ENCODE measurements at regions of chr7 and their contacts with region 1.

Region 1: GRCh38 chr7:56063882-56064625 is at the start of gene SUMF2:
- DNase-seq: peak; percentile 87 to 89 (median 89)
- H3K4me3 ChIP-seq: peak within 1 kb of the TSS; percentile 79 to 97 (median 92)
- H3K27ac ChIP-seq: peak within 1 kb of the TSS; percentile 46 to 80
- H3K4me1 ChIP-seq: peaks cover 6 to 28% (median 14%) of the 10 kb centered on the region in 4 experiments
- H3K27me3 ChIP-seq: no peaks in the 10 kb centered on the region

Region 2: GRCh38 chr7:55509322-55509721 is 554.7 kb before region 1 on chr7:
- CTCF ChIA-PET with region 1: no interaction called
- POLR2A ChIA-PET with region 1: interaction called, 10 read pairs
- DNase-seq: no peak
- H3K4me3 ChIP-seq: no peak overlapping the region
- H3K27ac ChIP-seq: no peak overlapping the region
- H3K4me1 ChIP-seq: no peaks in the 10 kb centered on the region
- H3K27me3 ChIP-seq: no peaks in the 10 kb centered on the region

Region 3: DNA sequence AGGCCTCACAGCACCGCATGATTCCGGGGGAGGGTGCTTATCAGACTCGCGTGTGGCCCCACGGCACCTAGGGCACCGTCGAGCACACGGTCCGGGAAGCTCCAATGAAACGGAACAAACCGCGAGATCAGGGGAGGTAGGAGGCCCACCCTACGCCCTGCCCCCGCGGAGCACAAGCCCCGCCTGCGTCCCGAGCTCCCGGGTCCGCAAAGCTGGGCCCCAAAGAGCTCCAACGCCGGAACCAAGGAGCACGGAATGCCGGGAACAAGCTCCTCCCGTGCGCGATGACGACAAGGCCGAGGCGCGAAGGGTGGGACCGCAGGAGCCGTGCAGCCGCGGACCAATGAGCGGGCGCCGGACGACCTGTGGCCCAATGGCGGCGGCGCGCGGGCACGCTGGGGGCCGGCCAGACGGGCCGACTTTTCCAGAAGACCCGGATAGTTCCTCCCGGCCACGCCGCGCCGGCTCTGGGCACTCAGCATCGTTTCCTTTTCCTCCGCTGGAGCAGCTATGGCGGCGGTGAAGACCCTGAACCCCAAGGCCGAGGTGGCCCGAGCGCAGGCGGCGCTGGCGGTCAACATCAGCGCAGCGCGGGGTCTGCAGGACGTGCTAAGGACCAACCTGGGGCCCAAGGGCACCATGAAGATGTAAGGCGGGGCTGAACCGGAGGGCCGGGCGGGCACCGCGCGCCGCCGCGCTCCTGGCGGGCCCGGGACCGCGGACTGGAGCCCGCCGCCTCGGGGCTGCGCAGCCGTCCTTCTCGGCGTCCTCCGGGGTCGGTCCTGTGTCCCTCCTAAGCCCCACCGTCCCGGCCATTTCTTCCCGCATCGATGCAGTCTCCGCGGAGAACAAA is 12.5 kb before region 1 on chr7 and contains the starts of genes CCT6A and PSPH:
- CTCF ChIA-PET with region 1: interaction called, 13 read pairs
- POLR2A ChIA-PET with region 1: interaction called, 10 read pairs
- DNase-seq: peak; percentile 93 to 95 (median 94)
- H3K4me3 ChIP-seq: peak within 1 kb of the TSS; percentile 79 to 98 (median 86)
- H3K27ac ChIP-seq: peak within 1 kb of the TSS; percentile 69 to 91
- H3K4me1 ChIP-seq: peaks cover 5 to 34% (median 21%) of the 10 kb centered on the region in 4 experiments
- H3K27me3 ChIP-seq: no peaks in the 10 kb centered on the region

Region 4: GRCh38 chr7:56083150-56083785 is 19.2 kb after region 1 on chr7:
- CTCF ChIA-PET with region 1: no interaction called
- POLR2A ChIA-PET with region 1: no interaction called
- DNase-seq: no peak
- H3K4me3 ChIP-seq: no peak overlapping the region
- H3K27ac ChIP-seq: no peak overlapping the region
- H3K4me1 ChIP-seq: peaks cover 0 to 10% (median 4%) of the 10 kb centered on the region in 4 experiments
- H3K27me3 ChIP-seq: no peaks in the 10 kb centered on the region